ENCODE measurements at regions of chr11 and their contacts with region 1.

Region 1: GRCh38 chr11:68889948-68890446 is 13.6 kb downstream of the MRPL21 start:
- DNase-seq: peak; percentile 88
- H3K4me3 ChIP-seq: no peak overlapping the region
- H3K27ac ChIP-seq: peak overlapping the region; percentile 66
- H3K4me1 ChIP-seq: peaks cover 25% of the 10 kb centered on the region
- H3K27me3 ChIP-seq: no peaks in the 10 kb centered on the region
- CTCF ChIP-seq: peak; percentile 92

Region 2: DNA sequence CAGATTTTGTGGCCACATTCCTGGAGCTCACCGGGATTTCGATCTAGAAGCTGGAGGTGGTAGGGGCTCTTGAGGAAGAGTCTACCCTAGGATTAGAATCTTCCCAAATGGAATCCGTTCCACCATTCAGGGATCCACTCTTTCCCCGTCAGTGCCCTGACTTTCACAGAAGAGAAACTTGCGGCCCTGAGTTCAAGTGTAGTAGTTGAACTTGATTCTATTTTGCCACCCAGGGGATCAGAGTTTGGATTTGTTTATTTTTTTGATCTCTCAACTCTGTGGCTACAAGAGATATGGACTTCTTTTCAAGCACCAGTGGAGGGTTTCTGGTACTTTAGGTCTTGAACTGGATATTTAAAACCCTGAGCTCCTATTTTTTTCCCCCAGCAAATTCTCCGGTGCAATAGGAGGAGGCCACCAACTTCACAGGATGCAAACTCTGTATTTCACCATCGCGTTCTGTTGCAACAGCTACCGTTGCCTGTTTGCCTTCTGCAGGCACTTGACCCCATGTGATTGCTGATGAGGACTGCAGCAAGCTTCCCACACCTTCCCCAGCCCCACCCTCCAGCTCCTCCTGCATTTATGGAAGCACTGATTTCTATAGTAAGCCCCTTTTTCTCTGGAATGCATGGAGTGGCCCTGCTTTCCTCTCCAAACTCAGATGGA is 137.8 kb after region 1 on chr11:
- CTCF ChIA-PET with region 1: interaction called, 11 read pairs
- POLR2A ChIA-PET with region 1: no interaction called
- intact Hi-C with region 1: no loop called
- DNase-seq: no peak
- H3K4me3 ChIP-seq: no peak overlapping the region
- H3K27ac ChIP-seq: no peak overlapping the region
- H3K4me1 ChIP-seq: no peaks in the 10 kb centered on the region
- H3K27me3 ChIP-seq: no peaks in the 10 kb centered on the region
- CTCF ChIP-seq: no peak

Measured in A673 (cell line).